ENCODE measurements at regions of chr13 and their contacts with region 1.

Region 1: DNA sequence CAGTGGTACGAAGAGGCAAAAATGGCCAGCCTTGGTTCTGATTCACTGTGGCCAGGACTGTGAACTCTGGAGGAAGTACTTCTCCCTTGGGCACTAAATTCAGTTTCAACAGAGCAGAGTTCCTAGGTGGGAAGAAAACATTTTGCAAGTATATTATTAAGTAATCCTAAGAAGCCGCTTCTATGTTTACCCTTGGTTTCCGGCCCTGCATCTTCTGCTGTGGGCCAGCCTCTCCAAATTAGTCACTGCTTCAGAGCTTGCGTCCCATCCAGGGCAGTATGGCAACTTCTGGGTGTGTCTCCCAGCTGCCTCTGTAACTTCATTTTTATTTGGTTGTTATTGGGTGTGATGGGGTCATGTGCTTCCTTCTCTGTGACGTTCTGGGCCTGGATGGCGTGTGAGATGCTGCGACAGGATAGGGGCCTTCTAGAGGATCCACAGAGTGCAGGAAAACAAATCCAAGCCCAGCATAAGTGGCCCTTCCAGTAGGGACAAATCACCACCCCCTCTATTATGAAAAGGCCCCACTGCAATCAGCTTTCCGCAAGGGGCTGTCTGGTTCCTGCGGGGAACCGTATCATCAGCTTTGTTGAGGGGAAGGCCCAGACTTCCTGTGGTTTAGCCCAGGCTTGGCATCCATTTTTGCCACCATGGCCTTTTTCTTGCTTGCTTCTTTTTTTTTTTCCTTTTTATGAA is 55.1 kb upstream of the C1QTNF9 start:
- DNase-seq: peak; percentile 60
- H3K4me3 Mint-ChIP-seq: peak overlapping the region; percentile 87
- H3K27ac Mint-ChIP-seq: peak overlapping the region; percentile 88
- H3K4me1 Mint-ChIP-seq: peaks cover 74% of the 10 kb centered on the region
- H3K27me3 Mint-ChIP-seq: no peaks in the 10 kb centered on the region

Region 2: GRCh38 chr13:24039621-24040475 is 214.4 kb before region 1 on chr13:
- intact Hi-C with region 1: no loop called
- DNase-seq: no peak
- H3K4me3 Mint-ChIP-seq: no peak overlapping the region
- H3K27ac Mint-ChIP-seq: no peak overlapping the region
- H3K4me1 Mint-ChIP-seq: peaks cover 32% of the 10 kb centered on the region
- H3K27me3 Mint-ChIP-seq: no peaks in the 10 kb centered on the region

Region 3: GRCh38 chr13:24264976-24265375 is 10.7 kb after region 1 on chr13:
- intact Hi-C with region 1: loop called (anchors 1 kb)
- DNase-seq: peak; percentile 79
- H3K4me3 Mint-ChIP-seq: peak overlapping the region; percentile 61
- H3K27ac Mint-ChIP-seq: peak overlapping the region; percentile 68
- H3K4me1 Mint-ChIP-seq: peaks cover 86% of the 10 kb centered on the region
- H3K27me3 Mint-ChIP-seq: no peaks in the 10 kb centered on the region

Region 4: GRCh38 chr13:24270639-24271141 is 16.4 kb after region 1 on chr13:
- intact Hi-C with region 1: loop called (anchors 1 kb)
- DNase-seq: peak; percentile 61
- H3K4me3 Mint-ChIP-seq: peak overlapping the region; percentile 97
- H3K27ac Mint-ChIP-seq: peak overlapping the region; percentile 95
- H3K4me1 Mint-ChIP-seq: peaks cover 81% of the 10 kb centered on the region
- H3K27me3 Mint-ChIP-seq: no peaks in the 10 kb centered on the region

Measured in activated T-helper 2 cell treated with anti-CD3 and anti-CD28 coated beads, Interferon-gamma antibody, Interleukin-2, Interleukin-4, amounts not matched to agents 10 μg/mL and 5 μg/mL and 100 μg/mL, durations not matched to agents 14 hours and 24 hours and 36 hours (primary cell).